Mammary epithelial cell (primary cell): ENCODE measurements at regions of chr10 and their contacts with region 1.

Region 1: DNA sequence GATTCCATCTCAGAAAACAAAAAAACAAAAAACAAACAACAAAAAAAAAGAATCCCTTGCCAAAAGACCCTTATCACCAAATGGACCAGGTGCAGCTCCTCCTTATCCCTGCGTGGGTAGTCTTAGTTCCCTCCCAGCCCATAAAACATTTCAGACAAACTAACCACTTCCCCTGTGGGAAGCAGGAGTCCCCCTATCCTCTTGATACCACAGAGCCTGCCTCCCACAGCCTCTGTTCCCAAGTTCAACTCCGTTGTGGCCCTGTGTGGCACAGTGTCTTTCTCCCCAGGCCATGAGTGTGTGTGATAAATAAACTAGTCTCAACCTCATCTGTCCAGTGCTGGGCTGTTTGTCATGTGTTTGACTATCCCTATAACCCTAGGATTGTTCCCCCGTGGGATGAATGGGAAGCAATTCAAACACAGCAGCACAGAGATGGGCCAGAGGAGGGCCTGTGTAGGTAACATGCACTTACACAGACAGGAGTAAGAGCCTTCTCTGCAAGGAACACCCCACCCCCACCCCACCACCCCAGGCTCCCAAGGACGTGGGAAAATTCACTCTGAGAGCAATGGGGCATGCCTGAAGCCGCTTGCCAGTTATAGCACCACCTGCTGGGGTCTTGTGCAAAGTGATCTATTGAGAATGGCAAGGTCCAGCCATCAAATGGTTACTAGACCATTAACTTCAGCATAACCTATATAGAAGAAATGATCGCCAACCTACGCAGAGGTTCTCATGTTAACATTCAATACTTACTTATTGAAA is 147.1 kb upstream of the GHITM start:
- DNase-seq: peak; percentile 20
- H3K4me3 ChIP-seq: no peak overlapping the region
- H3K27ac ChIP-seq: no peak overlapping the region
- H3K4me1 ChIP-seq: no peaks in the 10 kb centered on the region
- H3K27me3 ChIP-seq: no peaks in the 10 kb centered on the region
- CTCF ChIP-seq: peak; percentile 53 to 68

Region 2: GRCh38 chr10:83917537-83918506 is 74.3 kb before region 1 on chr10:
- CTCF ChIA-PET with region 1: no interaction called
- dilution Hi-C with region 1: loop called (anchors 5 kb)
- in situ Hi-C with region 1: no loop called
- intact Hi-C with region 1: no loop called
- DNase-seq: no peak
- H3K4me3 ChIP-seq: no peak overlapping the region
- H3K27ac ChIP-seq: no peak overlapping the region
- H3K4me1 ChIP-seq: no peaks in the 10 kb centered on the region
- H3K27me3 ChIP-seq: peaks cover 3% of the 10 kb centered on the region
- CTCF ChIP-seq: no peak